Activated CD4-positive, alpha-beta memory T cell treated with anti-CD3 and anti-CD28 coated beads for 36 hours (primary cell): ENCODE measurements at regions of chr2 and their contacts with region 1.

Region 1: DNA sequence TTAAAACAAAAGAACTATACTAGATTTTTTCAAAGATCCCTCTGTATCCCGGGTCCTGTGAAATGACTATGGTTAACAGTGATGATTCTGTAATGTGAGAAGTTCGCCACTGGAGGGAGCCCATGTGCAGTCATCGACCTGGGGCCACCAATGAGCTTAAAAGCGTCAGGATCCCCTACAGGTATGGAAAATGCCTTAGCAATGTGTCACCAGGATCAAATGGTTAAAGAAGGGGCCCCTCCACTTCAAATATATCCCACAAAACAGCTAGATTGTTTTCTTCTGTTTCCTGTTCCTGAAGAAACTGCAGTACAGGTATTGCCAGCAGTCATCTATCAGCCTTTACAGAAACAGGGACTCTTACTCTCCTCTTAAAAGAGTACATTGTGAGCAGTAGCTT is 15.3 kb downstream of the CHRNA1 start:
- DNase-seq: peak; percentile 81
- H3K4me3 Mint-ChIP-seq: no peak overlapping the region
- H3K27ac Mint-ChIP-seq: peak overlapping the region; percentile 45
- H3K4me1 Mint-ChIP-seq: peaks cover 45% of the 10 kb centered on the region
- H3K27me3 Mint-ChIP-seq: peaks cover 2% of the 10 kb centered on the region

Region 2: GRCh38 chr2:174492963-174493431 is 256.0 kb before region 1 on chr2:
- CTCF ChIA-PET with region 1: no interaction called
- POLR2A ChIA-PET with region 1: no interaction called
- intact Hi-C with region 1: loop called (anchors 2 kb)
- DNase-seq: peak; percentile 73
- H3K4me3 Mint-ChIP-seq: peak overlapping the region; percentile 70
- H3K27ac Mint-ChIP-seq: peak overlapping the region; percentile 93
- H3K4me1 Mint-ChIP-seq: peaks cover 72% of the 10 kb centered on the region
- H3K27me3 Mint-ChIP-seq: no peaks in the 10 kb centered on the region

Region 3: DNA sequence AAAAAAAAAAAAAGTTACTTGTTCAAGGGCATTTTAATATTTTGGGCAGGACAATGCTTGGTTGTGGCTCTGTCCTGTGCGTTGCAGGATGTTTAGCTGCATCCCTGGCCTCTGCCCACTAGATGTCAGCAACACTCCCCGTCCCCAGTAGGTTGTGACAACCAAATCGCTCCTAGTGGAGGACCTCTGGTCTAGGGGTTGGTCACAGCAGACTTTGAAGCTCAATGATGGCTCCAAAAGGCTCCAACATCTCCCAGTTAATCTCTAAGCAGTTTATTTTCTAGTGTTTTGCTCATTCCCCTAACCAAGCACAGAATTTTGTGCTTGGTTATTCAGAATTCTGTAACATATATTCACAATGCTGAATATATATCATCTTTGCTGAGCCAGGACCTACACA is 51.7 kb before region 1 on chr2:
- CTCF ChIA-PET with region 1: interaction called, 97 read pairs
- POLR2A ChIA-PET with region 1: no interaction called
- intact Hi-C with region 1: loop called (anchors 1 kb)
- DNase-seq: peak; percentile 78
- H3K4me3 Mint-ChIP-seq: no peak overlapping the region
- H3K27ac Mint-ChIP-seq: no peak overlapping the region
- H3K4me1 Mint-ChIP-seq: no peaks in the 10 kb centered on the region
- H3K27me3 Mint-ChIP-seq: no peaks in the 10 kb centered on the region

Region 4: GRCh38 chr2:174764280-174765255 is 15.6 kb after region 1 on chr2 and contains the start of gene CHRNA1:
- CTCF ChIA-PET with region 1: interaction called, 12 read pairs
- POLR2A ChIA-PET with region 1: no interaction called
- intact Hi-C with region 1: no loop called
- DNase-seq: no peak
- H3K4me3 Mint-ChIP-seq: no peak within 1 kb of the TSS
- H3K27ac Mint-ChIP-seq: no peak within 1 kb of the TSS
- H3K4me1 Mint-ChIP-seq: peaks cover 2% of the 10 kb centered on the region
- H3K27me3 Mint-ChIP-seq: peaks cover 5% of the 10 kb centered on the region
- total RNA-seq, gene CHRNA1: not detected

Region 5: DNA sequence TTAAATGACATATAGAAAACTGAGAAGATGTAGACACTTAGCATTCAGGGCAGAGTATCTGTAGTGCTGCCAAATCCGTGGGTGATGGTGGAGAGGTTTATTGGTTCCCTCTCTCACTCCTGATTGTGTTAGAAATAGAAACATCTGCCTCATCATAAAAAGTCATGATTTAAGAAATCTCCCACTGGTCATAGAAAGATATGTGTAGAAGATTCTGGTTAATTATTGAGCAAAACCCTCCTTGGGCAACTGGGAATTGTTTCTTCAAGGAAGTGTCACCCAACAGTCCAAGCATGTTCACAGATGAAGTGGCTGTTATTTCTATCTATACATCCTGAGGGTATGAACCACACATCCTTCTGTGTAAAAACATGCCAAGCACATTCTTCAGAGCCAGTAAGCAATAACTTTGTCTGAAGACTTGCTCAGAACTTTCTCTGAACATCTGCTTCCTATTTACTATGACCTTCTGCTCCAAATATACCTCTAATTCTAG is 48.9 kb after region 1 on chr2:
- CTCF ChIA-PET with region 1: interaction called, 11 read pairs
- POLR2A ChIA-PET with region 1: interaction called, 6 read pairs
- intact Hi-C with region 1: loop called (anchors 1 kb)
- DNase-seq: no peak
- H3K4me3 Mint-ChIP-seq: no peak overlapping the region
- H3K27ac Mint-ChIP-seq: no peak overlapping the region
- H3K4me1 Mint-ChIP-seq: peaks cover 24% of the 10 kb centered on the region
- H3K27me3 Mint-ChIP-seq: no peaks in the 10 kb centered on the region

Region 6: GRCh38 chr2:174985630-174986029 is 236.7 kb after region 1 on chr2:
- CTCF ChIA-PET with region 1: interaction called, 42 read pairs
- POLR2A ChIA-PET with region 1: no interaction called
- intact Hi-C with region 1: loop called (anchors 1 kb)
- DNase-seq: no peak
- H3K4me3 Mint-ChIP-seq: no peak overlapping the region
- H3K27ac Mint-ChIP-seq: no peak overlapping the region
- H3K4me1 Mint-ChIP-seq: peaks cover 2% of the 10 kb centered on the region
- H3K27me3 Mint-ChIP-seq: peaks cover 3% of the 10 kb centered on the region

Region 7: GRCh38 chr2:175154661-175155082 is 405.7 kb after region 1 on chr2:
- CTCF ChIA-PET with region 1: interaction called, 3 read pairs
- POLR2A ChIA-PET with region 1: no interaction called
- intact Hi-C with region 1: loop called (anchors 5 kb)
- DNase-seq: no peak
- H3K4me3 Mint-ChIP-seq: no peak overlapping the region
- H3K27ac Mint-ChIP-seq: peak overlapping the region; percentile 75
- H3K4me1 Mint-ChIP-seq: peaks cover 46% of the 10 kb centered on the region
- H3K27me3 Mint-ChIP-seq: no peaks in the 10 kb centered on the region